SK-N-SH (cell line): ENCODE measurements at regions of chr1 and their contacts with region 1.

Region 1: DNA sequence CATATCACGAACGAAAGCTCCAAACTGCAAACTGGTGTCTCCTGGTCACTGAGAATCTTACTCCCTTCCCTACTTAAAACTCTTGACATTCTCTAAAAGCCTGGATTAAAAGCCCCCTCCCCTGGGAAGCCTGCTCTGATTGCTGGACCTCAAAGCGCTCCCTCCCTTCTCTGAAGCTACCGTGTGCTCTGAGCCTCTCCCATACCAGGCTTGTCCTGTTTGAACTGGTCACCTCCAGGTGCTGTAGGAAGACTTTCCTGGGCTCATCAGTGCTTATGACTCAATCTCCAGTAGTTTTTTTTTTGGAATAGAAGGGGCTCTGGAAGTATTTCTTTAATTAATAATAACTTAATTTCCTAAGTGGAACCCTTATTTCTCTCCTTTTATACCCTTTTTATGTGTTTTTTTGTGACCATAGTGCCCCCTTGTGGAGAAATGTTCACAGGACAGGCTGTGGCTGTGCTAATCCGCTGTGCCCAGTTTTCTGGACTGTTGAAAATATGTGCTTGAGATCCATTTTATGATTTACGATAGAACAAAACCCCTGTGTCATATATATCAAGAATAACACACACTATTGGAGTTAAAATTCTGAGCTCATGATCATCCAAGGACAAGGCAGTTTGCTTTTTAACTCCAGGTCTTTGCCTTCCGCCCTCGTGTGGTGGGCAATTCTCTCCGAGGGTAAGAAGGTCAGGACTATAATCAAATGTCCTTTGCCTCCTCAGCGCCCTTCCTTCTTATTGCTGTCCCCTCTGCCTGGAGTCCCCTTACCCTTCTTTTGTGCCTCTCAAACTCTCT is 16.9 kb downstream of the MTARC1 start:
- DNase-seq: peak; percentile 60
- H3K4me3 ChIP-seq: no peak overlapping the region; a peak in 1 of 4 replicates
- H3K27ac ChIP-seq: no peak overlapping the region
- H3K4me1 ChIP-seq: peaks cover 0 to 5% of the 10 kb centered on the region in 2 experiments; a peak in 1 of 4 replicates
- H3K27me3 ChIP-seq: no peaks in the 10 kb centered on the region
- CTCF ChIP-seq: peak; percentile 94
- EP300 ChIP-seq: no peak
- RAD21 ChIP-seq: peak; percentile 68

Region 2: DNA sequence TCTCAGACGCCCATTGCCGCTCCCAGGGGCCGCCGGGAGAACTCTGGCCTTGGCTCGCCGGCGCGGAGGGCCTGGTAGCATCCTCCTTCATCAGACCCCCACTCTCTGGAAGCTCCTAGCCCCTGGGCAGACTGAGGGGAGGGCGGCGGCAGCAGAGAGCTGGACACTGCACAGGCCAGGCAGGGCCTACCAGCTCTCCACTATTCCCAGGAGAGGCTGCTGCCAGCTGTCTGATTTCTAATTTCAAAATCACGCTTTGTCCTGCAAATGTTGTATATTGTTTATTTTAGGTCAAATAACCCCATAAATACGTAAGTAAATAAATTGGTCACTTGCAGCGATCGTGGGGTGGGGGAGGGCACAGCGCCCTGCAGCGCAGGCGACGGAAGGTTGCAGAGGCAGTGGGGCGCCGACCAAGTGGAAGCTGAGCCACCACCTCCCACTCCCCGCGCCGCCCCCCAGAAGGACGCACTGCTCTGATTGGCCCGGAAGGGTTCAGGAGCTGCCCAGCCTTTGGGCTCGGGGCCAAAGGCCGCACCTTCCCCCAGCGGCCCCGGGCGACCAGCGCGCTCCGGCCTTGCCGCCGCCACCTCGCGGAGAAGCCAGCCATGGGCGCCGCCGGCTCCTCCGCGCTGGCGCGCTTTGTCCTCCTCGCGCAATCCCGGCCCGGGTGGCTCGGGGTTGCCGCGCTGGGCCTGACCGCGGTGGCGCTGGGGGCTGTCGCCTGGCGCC is 17.1 kb before region 1 on chr1 and contains the start of gene MTARC1:
- CTCF ChIA-PET with region 1: interaction called, 63 read pairs
- POLR2A ChIA-PET with region 1: no interaction called
- DNase-seq: peak; percentile 95
- H3K4me3 ChIP-seq: peak within 1 kb of the TSS; percentile 68 to 73
- H3K27ac ChIP-seq: peak within 1 kb of the TSS in 1 of 2 experiments; percentile 83; a peak in 2 of 4 replicates
- H3K4me1 ChIP-seq: peaks cover 0 to 30% of the 10 kb centered on the region in 2 experiments; a peak in 2 of 4 replicates
- H3K27me3 ChIP-seq: no peaks in the 10 kb centered on the region
- CTCF ChIP-seq: 0 out of 2 replicates have a peak, but pooled peaks have one; percentile 13
- EP300 ChIP-seq: no peak
- RAD21 ChIP-seq: no peak
- polyA plus RNA-seq, gene MTARC1: 5.4 and 6.1 TPM in 2 replicates

Region 3: DNA sequence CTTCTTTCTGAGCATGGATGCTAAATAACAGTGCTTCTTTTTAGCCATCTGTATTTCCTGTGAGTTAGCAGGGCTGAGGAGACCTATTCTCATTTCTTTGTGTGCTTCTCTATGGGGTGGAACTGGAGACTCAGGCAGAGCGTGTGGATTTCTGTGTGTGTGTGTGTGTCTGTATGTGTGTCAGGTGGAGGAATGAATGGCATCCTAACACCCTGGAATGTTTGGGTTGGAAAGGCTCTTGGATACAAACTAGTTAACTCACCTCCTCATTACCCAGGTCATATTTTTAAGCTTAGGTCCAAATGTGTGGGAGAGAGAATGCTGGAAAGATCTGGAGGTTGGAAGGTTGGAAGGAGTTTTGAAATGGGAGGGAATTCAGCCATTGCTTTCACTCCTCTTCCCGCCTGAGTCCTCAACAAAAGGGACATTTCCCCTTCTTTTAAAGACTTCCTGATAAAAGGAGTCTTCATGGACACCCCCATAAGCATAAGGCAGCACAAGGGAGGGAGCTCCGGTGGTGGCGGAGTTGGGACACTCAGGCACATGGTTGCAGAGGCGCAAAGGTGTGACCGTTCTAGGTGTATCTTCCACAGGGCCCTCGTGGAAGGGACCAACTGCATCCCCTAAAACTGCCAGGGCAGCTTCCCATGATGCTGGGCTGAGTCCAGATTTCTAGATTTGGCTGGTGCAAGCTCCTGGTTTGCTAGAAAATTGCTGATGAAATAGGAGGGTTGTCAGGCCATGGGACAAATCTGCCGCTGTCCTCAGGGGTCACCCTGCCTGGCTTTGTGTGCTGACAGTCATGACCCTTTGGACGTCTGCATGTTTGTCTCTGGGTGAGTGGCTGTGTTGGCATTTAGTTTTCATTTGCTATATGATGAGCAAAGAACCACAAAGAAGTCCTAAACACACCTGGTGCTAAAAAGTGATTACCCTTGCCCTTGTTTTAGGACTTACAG is 20.7 kb after region 1 on chr1:
- CTCF ChIA-PET with region 1: interaction called, 14 read pairs
- POLR2A ChIA-PET with region 1: no interaction called
- DNase-seq: no peak
- H3K4me3 ChIP-seq: no peak overlapping the region
- H3K27ac ChIP-seq: no peak overlapping the region
- H3K4me1 ChIP-seq: peaks cover 0 to 2% of the 10 kb centered on the region in 2 experiments; a peak in 1 of 4 replicates
- H3K27me3 ChIP-seq: no peaks in the 10 kb centered on the region; the same call in 1 of the 2 replicates
- CTCF ChIP-seq: no peak
- EP300 ChIP-seq: no peak
- RAD21 ChIP-seq: no peak

Region 4: GRCh38 chr1:220887520-220888416 is 84.2 kb after region 1 on chr1:
- CTCF ChIA-PET with region 1: no interaction called
- POLR2A ChIA-PET with region 1: no interaction called
- DNase-seq: peak; percentile 73
- H3K4me3 ChIP-seq: peak overlapping the region in 1 of 2 experiments; percentile 24; a peak in 1 of 4 replicates
- H3K27ac ChIP-seq: no peak overlapping the region
- H3K4me1 ChIP-seq: no peaks in the 10 kb centered on the region; a peak in 1 of 4 replicates
- H3K27me3 ChIP-seq: no peaks in the 10 kb centered on the region
- CTCF ChIP-seq: no peak
- EP300 ChIP-seq: no peak
- RAD21 ChIP-seq: no peak